Gastrocnemius medialis (tissue), 4 donors: ENCODE measurements at regions of chr18 and their contacts with region 1.

Region 1: DNA sequence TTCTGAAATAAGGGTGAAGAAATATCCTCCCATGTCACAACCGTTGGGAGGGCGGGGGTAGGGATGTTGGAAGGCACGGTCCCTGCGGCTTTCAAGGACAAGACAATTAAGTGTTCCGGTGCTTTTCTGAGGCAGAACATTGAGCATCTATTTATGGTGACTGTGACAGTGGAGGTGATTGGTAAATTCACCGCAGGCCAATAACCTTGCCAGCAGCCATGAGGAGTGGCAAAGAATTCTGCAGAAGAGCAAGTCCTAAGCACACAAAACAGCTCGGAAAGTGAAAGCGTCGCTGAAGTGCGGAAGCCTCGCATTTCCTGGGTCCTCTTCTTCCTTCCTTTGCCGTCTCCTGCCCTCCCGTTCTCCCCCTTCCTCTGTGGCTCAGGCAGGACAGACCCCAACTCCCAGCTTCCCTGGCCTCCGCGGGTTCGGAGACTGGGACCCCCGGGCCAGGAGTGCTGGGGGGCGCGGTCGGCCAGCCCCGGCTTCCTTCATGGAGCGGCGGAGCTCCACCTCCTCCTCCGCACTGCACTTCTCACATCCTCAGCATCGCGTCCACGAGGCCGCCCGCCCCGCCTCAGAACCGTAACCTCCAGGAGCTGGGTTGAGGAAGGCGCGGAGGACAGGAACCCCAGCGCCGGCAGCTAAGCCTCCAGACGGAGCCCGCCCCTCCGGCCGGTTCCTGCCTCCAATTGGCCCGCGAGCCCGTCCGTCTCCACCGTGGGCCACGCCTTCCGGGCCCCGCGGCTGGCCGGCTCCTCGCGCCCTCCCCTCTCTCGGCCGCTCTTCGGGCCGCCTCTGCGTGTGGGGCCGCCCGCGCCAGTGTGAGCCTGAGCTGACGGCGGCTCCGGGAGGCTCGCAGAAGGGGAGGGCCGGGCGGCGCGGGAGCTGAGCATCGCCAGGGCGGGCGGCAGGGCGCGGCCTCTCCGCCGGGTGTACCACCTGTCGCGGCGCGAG is at the start of gene ME2:
- DNase-seq: peak; percentile 83 to 88
- ATAC-seq: peak; percentile 87 to 91
- H3K4me3 ChIP-seq: peak within 1 kb of the TSS; percentile 80 to 96 (median 89)
- H3K27ac ChIP-seq: peak within 1 kb of the TSS; percentile 88 to 97 (median 94)
- H3K4me1 ChIP-seq: peaks cover 10 to 17% of the 10 kb centered on the region in 2 donors
- H3K27me3 ChIP-seq: no peaks in the 10 kb centered on the region
- CTCF ChIP-seq: peak in 1 of 5 experiments; percentile 5
- POLR2A ChIP-seq: peak; percentile 94 to 98
- total RNA-seq, gene ME2: 25.3 to 50.6 (median 46.5) TPM

Region 2: GRCh38 chr18:50662177-50662576 is 216.4 kb before region 1 on chr18:
- in situ Hi-C with region 1: no loop called
- intact Hi-C with region 1: loop called (anchors 10 kb)
- DNase-seq: no peak
- ATAC-seq: no peak
- H3K4me3 ChIP-seq: no peak overlapping the region
- H3K27ac ChIP-seq: no peak overlapping the region
- H3K4me1 ChIP-seq: peaks cover 33 to 50% of the 10 kb centered on the region in 2 donors
- H3K27me3 ChIP-seq: no peaks in the 10 kb centered on the region
- CTCF ChIP-seq: peak in 1 of 5 experiments; percentile 36
- POLR2A ChIP-seq: no peak

Region 3: DNA sequence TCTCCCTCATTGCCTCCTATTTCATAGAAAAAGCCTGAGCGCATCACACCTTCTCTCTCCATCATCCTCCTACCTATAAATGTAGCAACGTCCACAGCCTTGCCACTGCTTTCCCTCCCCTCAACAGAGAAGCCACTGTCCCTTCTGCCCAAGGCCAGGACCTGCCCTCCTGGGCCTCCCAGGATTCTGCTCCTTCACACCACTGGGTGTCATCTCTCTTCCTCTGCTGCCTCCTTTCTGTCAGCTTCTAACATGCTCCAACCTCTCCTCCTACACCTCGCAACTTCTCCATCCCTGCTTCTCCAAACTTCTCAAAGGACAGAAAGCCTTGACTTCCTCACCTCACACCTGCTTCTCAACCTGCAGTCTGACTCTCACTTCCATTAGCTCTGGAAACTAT is 20.9 kb before region 1 on chr18:
- in situ Hi-C with region 1: no loop called
- intact Hi-C with region 1: loop called (anchors 1 kb)
- DNase-seq: no peak
- ATAC-seq: peak in 1 of 2 donors; percentile 30
- H3K4me3 ChIP-seq: no peak overlapping the region
- H3K27ac ChIP-seq: peak overlapping the region; percentile 79 to 89 (median 86)
- H3K4me1 ChIP-seq: peaks cover 26 to 32% of the 10 kb centered on the region in 2 donors
- H3K27me3 ChIP-seq: no peaks in the 10 kb centered on the region
- CTCF ChIP-seq: peak in 1 of 5 experiments; percentile 19
- POLR2A ChIP-seq: no peak

Region 4: GRCh38 chr18:50967714-50968661 is 89.4 kb after region 1 on chr18 and contains the start of gene ELAC1:
- in situ Hi-C with region 1: loop called in 1 of 4 experiments (anchors 10 kb)
- intact Hi-C with region 1: loop called (anchors 1 kb)
- DNase-seq: peak; percentile 66 to 86
- ATAC-seq: peak; percentile 78 to 87
- H3K4me3 ChIP-seq: peak within 1 kb of the TSS; percentile 78 to 89 (median 80)
- H3K27ac ChIP-seq: peak within 1 kb of the TSS; percentile 92 to 99 (median 96)
- H3K4me1 ChIP-seq: peaks cover 30 to 33% of the 10 kb centered on the region in 2 donors
- H3K27me3 ChIP-seq: no peaks in the 10 kb centered on the region
- CTCF ChIP-seq: no peak
- POLR2A ChIP-seq: peak; percentile 96 to 99
- total RNA-seq, gene ELAC1: 1.6 to 13.7 (median 4.0) TPM

Region 5: GRCh38 chr18:51029694-51030536 is 151.3 kb after region 1 on chr18 and contains the start of gene SMAD4:
- in situ Hi-C with region 1: loop called in 1 of 4 experiments (anchors 10 kb)
- intact Hi-C with region 1: loop called (anchors 2 kb)
- DNase-seq: peak; percentile 93 to 95
- ATAC-seq: peak; percentile 90 to 94
- H3K4me3 ChIP-seq: peak within 1 kb of the TSS; percentile 62 to 67 (median 64)
- H3K27ac ChIP-seq: peak within 1 kb of the TSS; percentile 90 to 97 (median 92)
- H3K4me1 ChIP-seq: peaks cover 46 to 57% of the 10 kb centered on the region in 2 donors
- H3K27me3 ChIP-seq: no peaks in the 10 kb centered on the region
- CTCF ChIP-seq: no peak
- POLR2A ChIP-seq: peak; percentile 93 to 96
- total RNA-seq, gene SMAD4: 148 to 210 (median 168) TPM

Region 6: DNA sequence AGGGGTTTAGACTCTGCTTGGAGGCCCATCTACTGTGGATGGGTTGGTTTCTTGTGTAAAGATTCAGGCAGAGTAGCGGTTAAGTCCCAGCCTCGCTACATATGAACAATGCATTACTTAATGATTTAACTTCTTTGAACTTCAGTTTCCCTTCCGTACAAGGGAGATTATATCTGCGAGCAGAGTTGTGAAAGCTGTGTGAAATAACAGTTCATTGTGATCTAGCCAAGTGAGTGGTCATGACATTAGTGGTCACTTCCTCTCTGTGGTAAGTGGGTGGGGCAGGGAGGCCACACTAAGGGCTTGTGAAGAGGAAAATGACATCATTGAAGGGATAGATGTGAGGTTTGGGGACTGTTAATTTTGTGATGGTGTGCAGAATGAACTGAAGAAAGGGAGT is 332.9 kb after region 1 on chr18:
- in situ Hi-C with region 1: loop called in 1 of 4 experiments (anchors 25 kb)
- intact Hi-C with region 1: no loop called
- DNase-seq: peak in 1 of 2 donors; percentile 23
- ATAC-seq: peak in 1 of 2 donors; percentile 56
- H3K4me3 ChIP-seq: no peak overlapping the region
- H3K27ac ChIP-seq: no peak overlapping the region
- H3K4me1 ChIP-seq: no peaks in the 10 kb centered on the region
- H3K27me3 ChIP-seq: no peaks in the 10 kb centered on the region
- CTCF ChIP-seq: no peak
- POLR2A ChIP-seq: no peak